ENCODE measurements at regions of chr1 and their contacts with region 1.

Region 1: GRCh38 chr1:204398217-204399081 is 13.2 kb downstream of the PPP1R15B start:
- DNase-seq: peak; percentile 94
- ATAC-seq: peak; percentile 100
- H3K4me3 ChIP-seq: no peak overlapping the region
- H3K27ac ChIP-seq: peak overlapping the region; percentile 13
- H3K4me1 ChIP-seq: no peaks in the 10 kb centered on the region
- H3K27me3 ChIP-seq: no peaks in the 10 kb centered on the region
- CTCF ChIP-seq: peak; percentile 87
- EP300 ChIP-seq: 0 out of 4 replicates have a peak, but pooled peaks of 1 of the 2 experiments have one; percentile 7
- POLR2A ChIP-seq: no peak
- RAD21 ChIP-seq: peak; percentile 82

Region 2: GRCh38 chr1:204257954-204258752 is 140.3 kb before region 1 on chr1:
- CTCF ChIA-PET with region 1: no interaction called
- POLR2A ChIA-PET with region 1: no interaction called
- in situ Hi-C with region 1: no loop called
- intact Hi-C with region 1: loop called (anchors 1 kb)
- DNase-seq: peak; percentile 42
- ATAC-seq: peak; percentile 67
- H3K4me3 ChIP-seq: no peak overlapping the region
- H3K27ac ChIP-seq: no peak overlapping the region
- H3K4me1 ChIP-seq: peaks cover 38% of the 10 kb centered on the region
- H3K27me3 ChIP-seq: no peaks in the 10 kb centered on the region
- CTCF ChIP-seq: peak; percentile 85
- EP300 ChIP-seq: no peak
- POLR2A ChIP-seq: no peak
- RAD21 ChIP-seq: peak; percentile 83

Region 3: DNA sequence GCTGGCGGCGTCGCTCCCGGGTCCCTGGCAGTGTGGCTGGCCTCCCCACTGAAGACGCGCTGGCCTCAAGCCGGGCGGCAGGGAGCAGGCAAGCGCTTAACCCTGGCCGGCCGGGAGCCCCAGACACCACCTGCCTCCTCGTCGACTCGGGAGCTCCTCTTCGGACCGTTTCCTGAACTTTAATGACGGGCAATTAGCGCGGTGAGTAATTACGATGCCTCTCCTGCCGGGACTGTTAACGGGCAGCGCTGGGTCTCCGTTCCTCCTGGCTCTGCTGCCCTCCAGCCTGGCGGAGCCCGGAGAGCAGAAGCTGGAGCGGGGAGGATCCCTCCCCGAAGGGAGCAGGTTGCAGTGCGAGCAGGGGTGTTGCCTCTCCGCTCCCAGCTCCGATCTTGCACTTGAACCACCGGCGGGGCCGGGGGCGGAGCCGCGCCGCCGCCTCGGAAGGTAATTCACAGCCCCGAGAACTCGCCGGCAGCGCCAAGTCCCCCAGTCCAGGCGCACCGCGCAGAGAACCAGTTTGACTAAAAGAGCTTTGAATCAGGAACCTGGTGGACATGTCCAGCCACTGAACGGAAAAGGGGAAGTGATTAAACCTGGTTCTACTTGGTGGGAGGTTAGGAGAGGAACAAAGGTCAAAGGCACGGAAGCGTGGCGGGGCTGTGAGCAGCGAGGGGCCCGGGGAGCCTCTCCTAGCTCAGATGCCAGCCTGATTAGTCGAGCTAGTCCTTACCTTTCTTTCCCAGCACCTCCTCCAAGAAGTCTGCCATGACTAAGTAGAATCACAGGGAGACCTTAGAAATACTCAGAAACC is 20.4 kb before region 1 on chr1:
- CTCF ChIA-PET with region 1: interaction called, 7 read pairs
- POLR2A ChIA-PET with region 1: interaction called, 20 read pairs
- in situ Hi-C with region 1: no loop called
- intact Hi-C with region 1: loop called (anchors 1 kb)
- DNase-seq: peak; percentile 69
- ATAC-seq: peak; percentile 82
- H3K4me3 ChIP-seq: peak overlapping the region; percentile 81 to 85 (median 83)
- H3K27ac ChIP-seq: peak overlapping the region; percentile 65
- H3K4me1 ChIP-seq: peaks cover 66% of the 10 kb centered on the region
- H3K27me3 ChIP-seq: no peaks in the 10 kb centered on the region; a peak in 1 of 5 replicates
- CTCF ChIP-seq: no peak
- EP300 ChIP-seq: no peak; a peak in 1 of 4 replicates
- POLR2A ChIP-seq: peak; percentile 39 to 70; a peak in 3 of 4 replicates
- RAD21 ChIP-seq: no peak

Region 4: GRCh38 chr1:204411451-204412204 is 13.2 kb after region 1 on chr1 and contains the start of gene PPP1R15B:
- CTCF ChIA-PET with region 1: no interaction called
- POLR2A ChIA-PET with region 1: interaction called, 19 read pairs
- in situ Hi-C with region 1: no loop called
- intact Hi-C with region 1: no loop called
- DNase-seq: peak; percentile 95
- ATAC-seq: peak; percentile 96
- H3K4me3 ChIP-seq: peak within 1 kb of the TSS; percentile 95 to 99 (median 98)
- H3K27ac ChIP-seq: peak within 1 kb of the TSS; percentile 99
- H3K4me1 ChIP-seq: peaks cover 13% of the 10 kb centered on the region
- H3K27me3 ChIP-seq: no peaks in the 10 kb centered on the region; a peak in 1 of 5 replicates
- CTCF ChIP-seq: no peak
- EP300 ChIP-seq: peak; percentile 33 to 57; a peak in 3 of 4 replicates
- POLR2A ChIP-seq: peak; percentile 83 to 90
- RAD21 ChIP-seq: no peak
- total RNA-seq, gene PPP1R15B: 20.1 and 23.8 TPM in 2 replicates